Caco-2 (cell line): ENCODE measurements at regions of chr11 and their contacts with region 1.

Region 1: GRCh38 chr11:119323538-119324033 is 6.7 kb upstream of the MCAM start:
- DNase-seq: peak; percentile 82 to 89
- H3K4me3 ChIP-seq: no peak overlapping the region
- H3K4me3 Mint-ChIP-seq: no peak overlapping the region
- H3K27ac Mint-ChIP-seq: no peak overlapping the region
- H3K4me1 ChIP-seq: peaks cover 24% of the 10 kb centered on the region
- H3K4me1 Mint-ChIP-seq: no peaks in the 10 kb centered on the region
- H3K27me3 ChIP-seq: no peaks in the 10 kb centered on the region
- H3K27me3 Mint-ChIP-seq: no peaks in the 10 kb centered on the region
- CTCF ChIP-seq: peak; percentile 84 to 95

Region 2: GRCh38 chr11:119044708-119045107 is 278.9 kb before region 1 on chr11:
- CTCF ChIA-PET with region 1: interaction called, 12 read pairs
- POLR2A ChIA-PET with region 1: no interaction called
- intact Hi-C with region 1: no loop called
- DNase-seq: no peak
- H3K4me3 ChIP-seq: no peak overlapping the region
- H3K4me3 Mint-ChIP-seq: no peak overlapping the region
- H3K27ac Mint-ChIP-seq: peak overlapping the region; percentile 63
- H3K4me1 ChIP-seq: peaks cover 6% of the 10 kb centered on the region; the same call in 1 of the 2 replicates
- H3K4me1 Mint-ChIP-seq: peaks cover 10% of the 10 kb centered on the region
- H3K27me3 ChIP-seq: no peaks in the 10 kb centered on the region
- H3K27me3 Mint-ChIP-seq: no peaks in the 10 kb centered on the region
- CTCF ChIP-seq: peak; percentile 38 to 48

Region 3: DNA sequence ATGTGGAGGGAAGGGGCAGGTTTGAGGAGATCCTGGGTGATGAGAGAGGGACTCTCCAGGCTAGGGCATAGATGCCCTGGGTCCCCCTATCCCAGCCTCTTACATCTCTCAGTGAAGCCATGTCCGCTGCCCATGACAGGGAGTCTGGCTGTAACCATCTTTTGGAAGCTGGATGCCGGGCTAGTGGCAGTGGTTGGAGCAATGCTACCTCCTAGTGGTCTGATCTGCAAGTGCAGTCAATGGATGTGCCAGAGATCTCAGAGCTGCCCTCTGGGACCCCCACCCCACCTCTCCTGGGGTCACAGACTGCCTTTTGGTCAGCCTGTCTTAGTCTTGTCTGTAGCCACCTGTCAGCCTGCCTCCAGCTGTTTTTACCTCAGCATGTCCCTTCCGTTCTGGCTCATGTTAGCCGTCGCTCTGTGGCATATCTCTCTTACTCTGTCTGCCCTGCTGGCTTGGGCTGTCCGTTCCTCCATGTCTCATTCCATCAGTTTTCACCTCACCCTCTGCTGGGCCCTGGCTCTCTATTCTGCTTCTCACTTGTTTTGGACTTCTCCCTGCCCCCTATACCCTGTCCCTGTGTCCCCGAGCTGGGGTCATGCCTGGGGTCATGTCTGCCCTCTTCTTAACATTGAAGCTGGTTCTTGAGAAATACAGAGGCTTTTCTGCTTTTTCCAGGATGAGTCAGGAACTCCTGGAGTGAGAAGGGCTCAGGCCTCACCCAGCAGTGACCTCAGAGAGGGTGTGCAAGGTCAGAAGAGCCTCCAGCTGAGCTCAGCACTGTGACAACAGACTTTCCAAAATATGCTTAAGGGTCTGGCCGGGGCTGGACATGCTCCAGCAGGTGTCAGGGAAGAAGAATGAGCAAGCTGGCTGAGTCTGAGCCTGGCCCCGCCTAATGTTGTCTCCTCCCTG is 151.4 kb after region 1 on chr11:
- CTCF ChIA-PET with region 1: interaction called, 7 read pairs
- POLR2A ChIA-PET with region 1: no interaction called
- intact Hi-C with region 1: loop called (anchors 2 kb)
- DNase-seq: peak; percentile 65 to 79
- H3K4me3 ChIP-seq: no peak overlapping the region
- H3K4me3 Mint-ChIP-seq: no peak overlapping the region
- H3K27ac Mint-ChIP-seq: no peak overlapping the region
- H3K4me1 ChIP-seq: no peaks in the 10 kb centered on the region
- H3K4me1 Mint-ChIP-seq: no peaks in the 10 kb centered on the region
- H3K27me3 ChIP-seq: no peaks in the 10 kb centered on the region; the same call in 1 of the 2 replicates
- H3K27me3 Mint-ChIP-seq: peaks cover 11% of the 10 kb centered on the region
- CTCF ChIP-seq: peak; percentile 92 to 97